Psoas muscle (tissue), 8 donors: ENCODE measurements at regions of chrX and their contacts with region 1.

Region 1: GRCh38 chrX:101287402-101287801 is 3.7 kb downstream of the TAF7L start:
- DNase-seq: no peak
- ATAC-seq: no peak
- H3K4me3 ChIP-seq: no peak overlapping the region
- H3K27ac ChIP-seq: no peak overlapping the region
- H3K4me1 ChIP-seq: no peaks in the 10 kb centered on the region
- H3K27me3 ChIP-seq: peaks cover 0 to 20% (median 6%) of the 10 kb centered on the region in 3 donors
- CTCF ChIP-seq: peak; percentile 56

Region 2: GRCh38 chrX:100895365-100896075 is 391.9 kb before region 1 on chrX:
- intact Hi-C with region 1: loop called in 1 of 2 experiments (anchors 10 kb)
- DNase-seq: no peak
- ATAC-seq: no peak
- H3K4me3 ChIP-seq: no peak overlapping the region
- H3K27ac ChIP-seq: no peak overlapping the region
- H3K4me1 ChIP-seq: no peaks in the 10 kb centered on the region
- H3K27me3 ChIP-seq: peaks cover 0 to 6% (median 0%) of the 10 kb centered on the region in 3 donors
- CTCF ChIP-seq: peak; percentile 22